MCF 10A (cell line): ENCODE measurements at regions of chr2 and their contacts with region 1.

Region 1: DNA sequence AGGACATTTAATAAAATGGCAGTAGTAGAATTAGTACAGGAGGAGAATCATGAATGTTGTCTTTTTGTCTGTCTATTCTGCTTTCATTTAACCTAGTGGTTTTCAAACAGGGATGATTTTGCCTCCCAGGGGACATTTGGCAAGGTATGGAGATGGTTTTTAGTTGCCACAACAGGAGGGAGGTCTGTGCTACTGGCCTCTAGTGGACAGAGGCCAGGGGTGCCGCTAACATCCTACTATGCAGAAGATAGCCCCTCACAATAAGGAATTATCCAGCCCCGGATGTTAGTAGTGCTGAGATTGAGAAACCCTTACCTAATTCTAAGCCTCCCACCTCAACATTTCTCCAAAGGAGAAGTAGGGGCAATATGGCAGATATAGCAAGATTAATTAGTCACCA is 18.3 kb downstream of the FASTKD2 start:
- DNase-seq: peak; percentile 21
- H3K4me3 Mint-ChIP-seq: no peak overlapping the region
- H3K27ac Mint-ChIP-seq: no peak overlapping the region
- H3K4me1 Mint-ChIP-seq: no peaks in the 10 kb centered on the region
- H3K27me3 Mint-ChIP-seq: no peaks in the 10 kb centered on the region
- CTCF ChIP-seq: peak; percentile 35

Region 2: DNA sequence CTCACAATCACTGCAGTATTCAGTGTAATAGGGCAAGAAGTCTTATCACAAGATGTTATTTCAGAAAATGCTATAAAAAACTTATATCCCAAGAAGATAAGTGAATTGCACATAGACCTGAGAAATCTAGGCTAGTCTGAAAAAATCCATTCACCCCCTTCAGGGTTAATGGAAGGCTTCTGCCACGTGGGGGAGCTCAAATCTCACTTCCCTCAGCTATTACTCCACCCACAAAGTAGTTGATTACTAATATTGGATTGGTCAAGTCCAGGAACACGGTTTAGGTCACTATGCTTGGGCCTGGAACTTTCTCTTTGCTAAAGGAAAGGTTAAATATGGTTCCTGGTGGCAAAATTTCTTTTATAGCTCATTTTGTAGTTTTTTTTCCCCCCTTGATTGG is 391.6 kb before region 1 on chr2:
- CTCF ChIA-PET with region 1: interaction called, 6 read pairs
- POLR2A ChIA-PET with region 1: no interaction called
- intact Hi-C with region 1: loop called (anchors 2 kb)
- DNase-seq: peak; percentile 64
- H3K4me3 Mint-ChIP-seq: no peak overlapping the region
- H3K27ac Mint-ChIP-seq: no peak overlapping the region
- H3K4me1 Mint-ChIP-seq: no peaks in the 10 kb centered on the region
- H3K27me3 Mint-ChIP-seq: no peaks in the 10 kb centered on the region
- CTCF ChIP-seq: peak; percentile 44

Region 3: GRCh38 chr2:206556357-206556949 is 227.3 kb before region 1 on chr2:
- CTCF ChIA-PET with region 1: interaction called, 36 read pairs
- POLR2A ChIA-PET with region 1: no interaction called
- intact Hi-C with region 1: loop called (anchors 1 kb)
- DNase-seq: peak; percentile 57
- H3K4me3 Mint-ChIP-seq: no peak overlapping the region
- H3K27ac Mint-ChIP-seq: no peak overlapping the region
- H3K4me1 Mint-ChIP-seq: peaks cover 6% of the 10 kb centered on the region
- H3K27me3 Mint-ChIP-seq: peaks cover 12% of the 10 kb centered on the region
- CTCF ChIP-seq: peak; percentile 49

Region 4: GRCh38 chr2:206693399-206694137 is 90.2 kb before region 1 on chr2:
- CTCF ChIA-PET with region 1: interaction called, 138 read pairs
- POLR2A ChIA-PET with region 1: no interaction called
- intact Hi-C with region 1: loop called (anchors 1 kb)
- DNase-seq: peak; percentile 73
- H3K4me3 Mint-ChIP-seq: no peak overlapping the region
- H3K27ac Mint-ChIP-seq: no peak overlapping the region
- H3K4me1 Mint-ChIP-seq: no peaks in the 10 kb centered on the region
- H3K27me3 Mint-ChIP-seq: no peaks in the 10 kb centered on the region
- CTCF ChIP-seq: peak; percentile 70

Region 5: GRCh38 chr2:206708286-206708685 is 75.4 kb before region 1 on chr2:
- CTCF ChIA-PET with region 1: interaction called, 12 read pairs
- POLR2A ChIA-PET with region 1: no interaction called
- intact Hi-C with region 1: no loop called
- DNase-seq: no peak
- H3K4me3 Mint-ChIP-seq: no peak overlapping the region
- H3K27ac Mint-ChIP-seq: no peak overlapping the region
- H3K4me1 Mint-ChIP-seq: no peaks in the 10 kb centered on the region
- H3K27me3 Mint-ChIP-seq: peaks cover 25% of the 10 kb centered on the region
- CTCF ChIP-seq: no peak

Region 6: DNA sequence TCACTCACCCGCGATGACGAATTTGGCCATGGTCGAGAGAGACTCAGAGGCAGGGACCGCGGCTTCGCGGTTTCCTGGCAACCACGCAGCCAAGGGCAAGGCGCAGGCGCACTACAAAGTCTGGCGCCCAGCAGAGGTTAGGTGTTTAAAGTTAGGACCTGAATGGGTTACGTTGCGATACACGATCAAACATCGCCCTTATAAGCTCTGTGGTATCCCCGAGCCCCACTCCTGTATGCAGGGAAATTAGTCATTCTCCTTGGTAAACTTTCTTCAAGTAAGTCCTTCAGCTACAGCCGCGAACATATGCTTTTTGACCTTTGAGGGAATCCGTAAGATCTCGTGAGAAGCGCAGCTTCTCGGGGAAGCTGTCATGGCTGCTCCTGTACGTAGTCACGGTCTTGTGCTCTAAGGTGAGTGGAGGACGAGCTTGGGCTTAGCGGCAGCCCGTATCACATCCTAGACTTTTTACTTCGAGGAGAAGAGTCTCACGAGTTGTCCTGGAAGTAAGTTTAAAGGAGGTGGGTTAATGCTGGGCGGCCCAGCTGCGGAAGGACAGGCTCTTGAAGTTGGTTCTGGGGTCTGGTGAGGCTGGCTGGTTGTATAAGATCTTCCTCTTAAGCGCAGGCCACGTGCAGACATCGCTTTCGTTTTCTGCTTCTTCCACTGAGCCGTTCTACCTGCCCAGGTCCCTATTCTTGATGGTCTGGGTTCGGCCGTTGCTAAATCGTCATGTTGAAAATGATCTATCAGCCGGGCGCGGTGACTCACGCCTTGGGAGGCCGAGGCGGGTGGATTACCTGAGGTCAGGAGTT is 18.3 kb before region 1 on chr2 and contains the starts of genes FASTKD2 and MDH1B:
- CTCF ChIA-PET with region 1: interaction called, 124 read pairs
- POLR2A ChIA-PET with region 1: interaction called, 3 read pairs
- intact Hi-C with region 1: no loop called
- DNase-seq: peak; percentile 94
- H3K4me3 Mint-ChIP-seq: peak within 1 kb of the TSS; percentile 85
- H3K27ac Mint-ChIP-seq: peak within 1 kb of the TSS; percentile 97
- H3K4me1 Mint-ChIP-seq: peaks cover 25% of the 10 kb centered on the region
- H3K27me3 Mint-ChIP-seq: no peaks in the 10 kb centered on the region
- CTCF ChIP-seq: no peak
- total RNA-seq, gene FASTKD2: 28.9 and 34.6 TPM in 2 replicates
- total RNA-seq, gene MDH1B: 0.66 and 0.77 TPM in 2 replicates

Region 7: GRCh38 chr2:206800506-206801417 is 17.0 kb after region 1 on chr2:
- CTCF ChIA-PET with region 1: interaction called, 66 read pairs
- POLR2A ChIA-PET with region 1: interaction called, 3 read pairs
- intact Hi-C with region 1: no loop called
- DNase-seq: peak; percentile 84
- H3K4me3 Mint-ChIP-seq: no peak overlapping the region
- H3K27ac Mint-ChIP-seq: no peak overlapping the region
- H3K4me1 Mint-ChIP-seq: no peaks in the 10 kb centered on the region
- H3K27me3 Mint-ChIP-seq: no peaks in the 10 kb centered on the region
- CTCF ChIP-seq: peak; percentile 76